CD4-positive, alpha-beta memory T cell (primary cell): ENCODE measurements at regions of chr5 and their contacts with region 1.

Region 1: GRCh38 chr5:131068893-131069643 is 96.0 kb downstream of the HINT1 start:
- DNase-seq: peak; percentile 63 to 73 (median 71)
- H3K4me3 ChIP-seq: no peak overlapping the region
- H3K4me3 Mint-ChIP-seq: peak overlapping the region; percentile 30 to 82 (median 72)
- H3K27ac ChIP-seq: peak overlapping the region; percentile 23
- H3K27ac Mint-ChIP-seq: peak overlapping the region; percentile 72 to 95 (median 83)
- H3K4me1 ChIP-seq: peaks cover 44% of the 10 kb centered on the region
- H3K4me1 Mint-ChIP-seq: peaks cover 38 to 55% (median 44%) of the 10 kb centered on the region in 4 donors
- H3K27me3 ChIP-seq: no peaks in the 10 kb centered on the region
- H3K27me3 Mint-ChIP-seq: no peaks in the 10 kb centered on the region

Region 2: GRCh38 chr5:129963359-129963758 is 1105.7 kb before region 1 on chr5:
- CTCF ChIA-PET with region 1: no interaction called
- POLR2A ChIA-PET with region 1: no interaction called
- intact Hi-C with region 1: no loop called
- DNase-seq: no peak
- H3K4me3 ChIP-seq: no peak overlapping the region
- H3K4me3 Mint-ChIP-seq: no peak overlapping the region
- H3K27ac ChIP-seq: no peak overlapping the region
- H3K27ac Mint-ChIP-seq: no peak overlapping the region
- H3K4me1 ChIP-seq: no peaks in the 10 kb centered on the region
- H3K4me1 Mint-ChIP-seq: no peaks in the 10 kb centered on the region
- H3K27me3 ChIP-seq: no peaks in the 10 kb centered on the region
- H3K27me3 Mint-ChIP-seq: peaks cover 0 to 2% of the 10 kb centered on the region in 2 donors

Region 3: DNA sequence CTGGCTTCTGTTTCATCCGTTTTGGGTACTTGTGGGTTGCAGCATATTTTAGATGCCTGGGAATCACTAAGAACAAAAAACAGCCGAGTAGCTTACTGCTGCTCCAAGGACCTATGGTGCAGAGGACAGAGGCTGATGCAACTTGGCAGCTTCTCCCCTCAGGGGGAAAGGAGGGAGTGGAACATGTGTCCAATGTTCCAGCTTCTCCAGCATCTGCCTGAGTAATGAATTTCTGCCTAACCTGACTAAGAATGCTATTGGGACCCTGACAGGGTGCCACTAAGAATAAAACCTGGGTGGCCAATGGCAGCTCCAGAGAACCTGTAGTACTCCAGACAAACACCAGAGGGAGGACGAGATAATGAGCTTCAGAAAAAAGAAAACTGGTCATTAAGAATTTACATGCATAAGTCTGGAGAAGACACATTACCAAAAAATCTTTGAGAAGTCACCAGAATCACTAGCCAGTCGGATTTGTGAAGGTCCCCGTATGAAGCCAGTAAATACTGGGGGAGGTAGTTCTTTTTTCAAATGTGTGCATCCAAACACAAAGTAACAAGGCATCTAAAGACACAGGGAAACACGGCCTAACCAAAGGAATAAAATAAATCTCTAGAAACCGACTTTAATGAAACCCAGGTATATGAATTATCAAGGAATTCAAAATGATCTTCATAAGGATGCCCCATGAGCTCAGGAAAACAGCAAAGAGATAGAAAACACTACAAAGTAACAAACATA is 197.6 kb before region 1 on chr5:
- CTCF ChIA-PET with region 1: interaction called, 11 read pairs
- POLR2A ChIA-PET with region 1: no interaction called
- intact Hi-C with region 1: loop called (anchors 1 kb)
- DNase-seq: peak; percentile 34 to 60 (median 49)
- H3K4me3 ChIP-seq: no peak overlapping the region
- H3K4me3 Mint-ChIP-seq: no peak overlapping the region
- H3K27ac ChIP-seq: no peak overlapping the region
- H3K27ac Mint-ChIP-seq: no peak overlapping the region
- H3K4me1 ChIP-seq: no peaks in the 10 kb centered on the region
- H3K4me1 Mint-ChIP-seq: no peaks in the 10 kb centered on the region
- H3K27me3 ChIP-seq: no peaks in the 10 kb centered on the region
- H3K27me3 Mint-ChIP-seq: no peaks in the 10 kb centered on the region

Region 4: DNA sequence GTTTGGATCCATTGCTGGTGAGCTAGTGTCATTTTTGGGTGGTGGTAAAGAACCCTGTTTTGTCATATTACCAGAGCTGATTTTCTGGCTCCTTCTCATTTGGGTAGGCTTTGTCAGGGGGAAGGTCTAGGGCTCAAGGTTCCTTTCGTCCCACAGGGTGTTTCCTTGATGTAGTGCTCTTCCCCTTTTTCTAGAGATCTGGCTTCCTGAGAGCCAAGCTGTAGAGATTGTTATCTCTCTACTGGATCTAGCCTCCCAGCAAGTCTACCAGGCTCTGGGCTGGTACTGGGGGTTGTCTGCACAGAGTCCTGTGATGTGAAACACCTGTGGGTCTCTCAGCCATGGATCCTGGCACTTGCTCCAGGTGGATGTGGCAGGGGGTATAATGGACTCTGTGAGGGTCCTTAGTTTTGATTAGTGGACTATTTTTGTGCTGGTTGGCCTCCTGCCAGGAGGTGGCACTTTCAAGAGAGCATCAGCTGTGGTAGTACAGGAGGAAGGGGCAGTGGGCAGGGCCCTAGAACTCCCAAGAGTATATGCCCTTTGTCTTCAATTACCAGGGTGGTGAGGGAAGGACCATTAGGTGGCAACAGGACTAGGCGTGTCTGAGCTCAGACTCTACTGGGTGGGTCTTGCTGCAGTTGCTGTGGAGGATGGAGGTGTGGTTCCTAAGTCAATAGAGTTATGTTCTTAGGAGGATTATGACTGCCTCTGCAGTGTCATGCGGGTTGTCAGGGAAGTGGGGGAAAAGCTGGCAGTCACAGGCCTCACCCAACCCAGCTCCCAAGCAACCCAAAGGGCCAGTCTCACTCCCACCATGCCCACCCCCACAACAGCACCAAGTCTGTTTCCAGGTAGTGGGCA is 49.7 kb before region 1 on chr5:
- CTCF ChIA-PET with region 1: no interaction called
- POLR2A ChIA-PET with region 1: no interaction called
- intact Hi-C with region 1: loop called (anchors 10 kb)
- DNase-seq: no peak
- H3K4me3 ChIP-seq: no peak overlapping the region
- H3K4me3 Mint-ChIP-seq: no peak overlapping the region
- H3K27ac ChIP-seq: no peak overlapping the region
- H3K27ac Mint-ChIP-seq: no peak overlapping the region
- H3K4me1 ChIP-seq: peaks cover 5% of the 10 kb centered on the region
- H3K4me1 Mint-ChIP-seq: peaks cover 10 to 18% (median 17%) of the 10 kb centered on the region in 4 donors
- H3K27me3 ChIP-seq: no peaks in the 10 kb centered on the region
- H3K27me3 Mint-ChIP-seq: peaks cover 0 to 8% of the 10 kb centered on the region in 2 donors